ENCODE measurements at regions of chr9 and their contacts with region 1.

Region 1: DNA sequence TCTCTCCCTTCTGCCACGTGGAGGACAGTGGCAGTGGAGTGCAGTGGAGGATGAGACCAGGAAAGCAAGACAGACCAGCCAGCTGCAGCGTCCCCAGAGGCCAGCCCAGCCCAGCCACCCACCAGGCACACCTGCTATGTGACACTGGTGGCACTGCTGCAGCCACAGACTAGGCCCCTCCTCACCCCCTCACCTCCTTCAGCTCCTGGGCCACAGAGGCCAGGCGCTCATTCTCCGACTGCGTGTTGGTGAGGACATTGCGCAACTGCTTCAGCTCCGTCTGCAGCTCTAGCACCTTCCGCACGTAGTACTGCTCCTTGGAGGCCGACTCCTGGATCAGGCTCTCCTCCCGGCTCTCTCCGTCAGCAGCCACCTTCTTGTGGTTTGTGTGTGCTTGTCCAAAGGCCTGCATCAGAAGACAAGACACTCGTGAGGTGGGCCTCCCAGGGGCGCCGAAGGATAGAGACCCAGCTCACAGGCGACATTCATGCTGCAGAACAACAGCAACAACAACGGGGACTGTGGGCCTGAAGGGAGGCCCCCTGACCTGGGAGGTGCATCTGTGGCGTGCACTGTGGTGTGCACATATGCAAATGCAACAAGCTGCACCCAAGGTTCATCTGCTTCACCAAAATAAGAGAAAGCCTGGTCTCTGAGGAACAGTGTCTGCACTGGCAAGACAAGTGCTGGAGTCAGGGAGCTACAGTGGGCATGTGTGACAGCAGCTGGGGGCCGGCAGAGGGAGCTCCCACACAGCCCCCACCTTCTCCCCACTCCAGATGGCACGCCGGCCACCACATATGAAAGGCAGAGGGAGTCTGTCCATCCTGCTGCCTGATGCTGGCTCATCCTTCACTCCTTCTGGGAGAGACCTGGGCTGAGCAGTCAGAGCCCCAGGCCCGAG is 35.5 kb downstream of the BICD2 start:
- ATAC-seq: peak in 6 of 8 experiments; percentile 29 to 92 (median 70)
- H3K4me3 ChIP-seq: no peak overlapping the region
- H3K27ac ChIP-seq: no peak overlapping the region
- H3K4me1 ChIP-seq: peaks cover 1 to 4% of the 10 kb centered on the region in 2 donors

Region 2: DNA sequence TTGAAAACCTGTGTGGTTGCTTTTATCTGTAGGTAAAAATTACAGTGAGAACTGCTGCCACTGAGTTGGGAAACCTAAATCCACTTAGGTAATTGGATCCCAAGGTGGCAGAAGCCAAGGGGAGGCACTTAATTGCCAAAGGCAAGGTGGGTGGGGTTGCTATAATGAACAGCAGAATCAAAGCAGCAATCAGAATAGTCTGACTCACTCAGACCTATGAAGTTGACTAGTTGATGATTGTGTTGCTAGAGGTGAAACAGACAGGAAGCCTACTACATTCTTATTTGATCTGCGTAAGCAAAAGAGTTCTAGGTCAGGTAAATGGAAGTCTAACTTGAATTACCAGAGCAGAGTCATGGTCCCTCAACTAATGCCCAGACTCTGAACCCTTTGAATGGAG is 52.8 kb after region 1 on chr9:
- in situ Hi-C with region 1: loop called in 1 of 9 experiments (anchors 10 kb)
- ATAC-seq: peak in 3 of 8 experiments; percentile 47 to 86 (median 78)
- H3K4me3 ChIP-seq: no peak overlapping the region
- H3K27ac ChIP-seq: no peak overlapping the region
- H3K4me1 ChIP-seq: no peaks in the 10 kb centered on the region

Region 3: GRCh38 chr9:92829420-92829819 is 100.3 kb after region 1 on chr9:
- in situ Hi-C with region 1: no loop called
- ATAC-seq: no peak
- H3K4me3 ChIP-seq: no peak overlapping the region
- H3K27ac ChIP-seq: no peak overlapping the region
- H3K4me1 ChIP-seq: no peaks in the 10 kb centered on the region